Panc1 (cell line): ENCODE measurements at regions of chr16 and their contacts with region 1.

Region 1: DNA sequence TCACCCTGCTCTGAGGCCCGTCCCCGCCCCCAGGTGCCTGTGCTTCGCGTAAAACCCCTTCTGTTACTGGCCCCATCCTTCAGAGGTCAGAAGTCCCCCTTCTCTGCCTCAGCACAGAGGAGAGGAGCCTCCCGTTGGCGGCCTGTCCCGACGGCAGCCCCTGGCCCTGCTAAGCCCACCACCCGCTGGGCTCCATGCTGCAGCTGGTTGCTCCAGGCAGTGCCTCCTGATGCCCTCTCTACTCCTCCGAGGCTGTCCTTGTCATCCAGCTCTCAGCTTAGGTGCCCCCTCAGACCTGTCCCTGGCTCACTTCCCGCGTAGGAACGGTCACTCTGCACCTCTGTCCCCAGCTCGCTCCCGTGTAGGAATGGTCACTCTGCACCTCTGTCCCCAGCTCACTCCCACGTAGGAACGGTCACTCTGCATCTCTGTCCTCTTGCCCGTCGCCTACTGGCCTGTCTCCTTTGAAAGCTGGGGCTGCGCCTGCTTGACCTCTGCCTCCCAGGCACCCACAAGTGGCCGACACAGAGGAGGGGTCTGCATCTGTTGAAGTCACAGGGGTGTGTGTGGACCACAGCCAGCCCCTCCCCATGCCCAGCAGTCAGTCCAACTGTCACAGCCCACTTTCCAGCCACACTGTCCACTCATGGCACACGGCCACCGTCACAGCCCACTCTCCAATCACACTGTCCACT is 31.7 kb upstream of the ZC3H18 start:
- DNase-seq: no peak
- ATAC-seq: no peak
- H3K4me3 ChIP-seq: no peak overlapping the region
- H3K27ac ChIP-seq: no peak overlapping the region
- H3K4me1 ChIP-seq: no peaks in the 10 kb centered on the region
- H3K27me3 ChIP-seq: no peaks in the 10 kb centered on the region
- CTCF ChIP-seq: no peak

Region 2: GRCh38 chr16:88403794-88404581 is 134.5 kb before region 1 on chr16:
- CTCF ChIA-PET with region 1: no interaction called
- POLR2A ChIA-PET with region 1: no interaction called
- in situ Hi-C with region 1: no loop called
- intact Hi-C with region 1: no loop called
- DNase-seq: no peak
- ATAC-seq: peak; percentile 46; the same call in 1 of the 2 replicates
- H3K4me3 ChIP-seq: no peak overlapping the region
- H3K27ac ChIP-seq: no peak overlapping the region
- H3K4me1 ChIP-seq: no peaks in the 10 kb centered on the region
- H3K27me3 ChIP-seq: no peaks in the 10 kb centered on the region
- CTCF ChIP-seq: no peak

Region 3: DNA sequence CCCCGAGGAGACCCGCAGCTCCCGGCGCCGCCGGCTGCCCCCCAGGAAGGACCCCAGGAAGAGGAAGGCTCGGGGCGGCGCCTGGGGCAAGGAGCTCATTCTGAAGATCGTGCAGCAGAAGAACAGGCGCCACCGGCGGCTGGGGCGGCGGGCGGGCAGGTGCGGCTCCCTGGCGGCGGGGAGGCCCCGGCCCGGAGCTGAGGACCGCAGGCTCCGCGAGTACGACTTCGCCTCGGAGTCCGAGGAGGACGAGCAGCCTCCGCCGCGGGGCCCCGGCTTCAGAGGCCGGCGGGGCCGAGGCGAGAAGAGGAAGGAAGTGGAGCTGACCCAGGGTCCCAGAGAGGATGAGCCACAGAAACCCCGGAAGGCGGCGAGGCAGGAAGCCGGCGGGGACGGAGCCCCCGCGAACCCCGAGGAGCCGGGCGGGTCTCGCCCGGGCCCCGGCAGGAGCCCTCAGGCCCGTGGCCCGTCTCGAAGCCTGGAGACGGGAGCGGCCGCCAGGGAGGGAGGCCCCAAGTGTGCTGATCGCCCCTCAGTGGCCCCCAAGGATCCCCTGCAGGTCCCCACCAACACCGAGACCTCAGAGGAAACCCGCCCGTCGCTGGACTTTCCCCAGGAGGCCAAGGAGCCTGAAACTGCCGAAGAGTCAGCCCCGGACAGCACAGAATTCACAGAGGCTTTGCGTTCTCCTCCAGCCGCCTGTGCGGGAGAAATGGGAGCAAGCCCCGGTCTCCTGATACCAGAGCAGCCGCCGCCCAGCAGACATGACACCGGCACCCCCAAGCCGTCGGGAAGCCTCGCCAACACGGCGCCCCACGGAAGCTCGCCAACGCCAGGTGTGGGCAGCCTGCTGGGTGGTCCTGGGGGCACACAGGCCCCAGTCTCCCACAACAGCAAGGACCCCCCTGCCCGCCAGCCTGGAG is 107.7 kb before region 1 on chr16:
- CTCF ChIA-PET with region 1: no interaction called
- POLR2A ChIA-PET with region 1: interaction called, 10 read pairs
- in situ Hi-C with region 1: no loop called
- intact Hi-C with region 1: no loop called
- DNase-seq: no peak
- ATAC-seq: no peak
- H3K4me3 ChIP-seq: no peak overlapping the region
- H3K27ac ChIP-seq: no peak overlapping the region
- H3K4me1 ChIP-seq: no peaks in the 10 kb centered on the region
- H3K27me3 ChIP-seq: no peaks in the 10 kb centered on the region
- CTCF ChIP-seq: no peak

Region 4: DNA sequence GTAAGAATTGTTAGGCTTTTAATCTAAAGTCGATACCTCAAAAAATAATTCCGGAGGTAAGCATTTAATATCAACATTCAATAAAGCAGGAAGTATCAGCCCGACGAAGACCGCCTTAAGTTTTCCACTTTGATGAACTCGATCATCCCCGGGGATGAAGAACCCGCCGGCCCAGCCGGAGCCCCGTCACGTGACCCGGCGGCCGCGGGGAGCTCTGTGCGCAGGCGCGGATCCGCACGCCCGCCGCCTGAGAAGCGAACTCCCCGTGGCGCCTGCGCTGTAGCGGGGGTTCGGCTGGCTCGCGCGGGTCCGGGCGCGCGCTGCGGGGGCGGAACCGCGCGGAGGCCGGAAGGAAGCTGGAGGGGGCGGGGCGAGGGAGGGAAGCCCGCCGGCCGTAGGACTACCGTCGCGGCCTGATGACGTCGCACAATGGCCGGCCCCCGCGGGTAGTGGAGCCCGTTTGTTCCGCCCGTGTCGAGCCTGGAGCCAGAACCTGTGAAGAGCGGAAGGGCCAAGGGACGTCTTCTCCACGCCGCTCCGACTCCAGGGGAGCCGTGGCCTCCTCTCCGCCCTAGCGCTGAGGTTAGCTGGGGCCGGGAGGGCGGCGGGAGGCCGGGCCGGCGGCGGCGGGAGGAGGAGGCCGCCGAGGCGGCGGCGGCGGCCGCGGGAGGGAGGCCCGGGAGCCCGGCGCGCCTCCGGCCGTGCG is 31.6 kb after region 1 on chr16 and contains the start of gene ZC3H18:
- CTCF ChIA-PET with region 1: no interaction called
- POLR2A ChIA-PET with region 1: interaction called, 13 read pairs
- in situ Hi-C with region 1: no loop called
- intact Hi-C with region 1: no loop called
- DNase-seq: no peak
- ATAC-seq: peak; percentile 92
- H3K4me3 ChIP-seq: peak within 1 kb of the TSS; percentile 82 to 86
- H3K27ac ChIP-seq: peak within 1 kb of the TSS; percentile 89
- H3K4me1 ChIP-seq: peaks cover 10% of the 10 kb centered on the region
- H3K27me3 ChIP-seq: no peaks in the 10 kb centered on the region
- CTCF ChIP-seq: no peak
- total RNA-seq, gene ZC3H18: 45.9 TPM